Activated CD4-positive, alpha-beta T cell treated with anti-CD3 and anti-CD28 coated beads for 36 hours (primary cell): ENCODE measurements at regions of chr7 and their contacts with region 1.

Region 1: GRCh38 chr7:150448789-150449147 is 1.7 kb upstream of the GIMAP8 start:
- DNase-seq: peak; percentile 95
- ATAC-seq: peak; percentile 41
- H3K4me3 Mint-ChIP-seq: peak overlapping the region; percentile 91
- H3K27ac Mint-ChIP-seq: peak overlapping the region; percentile 96
- H3K4me1 Mint-ChIP-seq: peaks cover 51% of the 10 kb centered on the region
- H3K27me3 Mint-ChIP-seq: no peaks in the 10 kb centered on the region

Region 2: DNA sequence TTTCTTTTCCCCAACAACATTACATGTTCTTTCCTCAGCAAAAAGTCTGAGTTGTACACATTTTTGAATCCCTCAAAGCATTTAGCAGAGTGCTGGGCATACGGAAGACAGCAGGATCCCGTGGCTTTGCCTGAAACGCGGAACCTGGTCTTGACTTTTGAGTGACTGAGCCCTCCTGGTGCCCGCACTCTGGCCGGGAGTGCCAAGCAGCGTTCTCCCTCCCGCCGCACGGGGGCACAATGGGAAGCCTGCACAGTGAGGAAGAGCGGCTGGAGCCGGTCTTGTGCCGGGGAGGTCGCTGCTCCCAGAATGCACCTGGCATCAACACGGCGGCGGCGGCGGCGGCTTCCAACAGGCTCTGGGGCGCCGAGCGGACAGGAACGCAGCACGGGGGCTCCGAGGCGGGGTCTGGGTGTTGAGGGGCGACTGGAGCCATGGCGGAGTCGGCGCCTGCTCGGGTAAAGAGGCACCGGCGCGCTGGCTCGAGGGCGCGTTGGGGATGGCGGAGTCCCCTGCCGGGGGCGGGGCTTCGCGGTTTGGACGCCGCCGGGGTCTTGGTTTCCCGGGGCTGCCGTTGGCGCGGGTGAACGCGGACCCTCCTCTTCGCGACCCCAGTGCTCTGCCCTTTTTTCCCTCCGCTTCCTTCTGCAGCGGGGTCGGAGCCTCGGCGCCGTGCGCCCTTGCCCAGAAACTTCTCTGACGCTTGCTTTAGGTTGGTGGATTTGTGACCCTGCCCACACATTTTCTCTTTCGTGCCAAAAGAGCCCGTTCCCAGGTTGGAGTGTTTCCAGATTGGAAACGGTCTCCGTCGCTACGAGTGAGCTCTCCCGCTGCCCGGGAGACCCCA is 1209.2 kb before region 1 on chr7 and contains the start of gene ZNF212:
- CTCF ChIA-PET with region 1: no interaction called
- POLR2A ChIA-PET with region 1: no interaction called
- intact Hi-C with region 1: loop called in 1 of 2 experiments (anchors 5 kb)
- DNase-seq: peak; percentile 95
- ATAC-seq: peak; percentile 98
- H3K4me3 Mint-ChIP-seq: peak within 1 kb of the TSS; percentile 93
- H3K27ac Mint-ChIP-seq: peak within 1 kb of the TSS; percentile 83
- H3K4me1 Mint-ChIP-seq: peaks cover 32% of the 10 kb centered on the region
- H3K27me3 Mint-ChIP-seq: no peaks in the 10 kb centered on the region
- total RNA-seq, gene ZNF212: 9.9 to 15.9 TPM

Region 3: DNA sequence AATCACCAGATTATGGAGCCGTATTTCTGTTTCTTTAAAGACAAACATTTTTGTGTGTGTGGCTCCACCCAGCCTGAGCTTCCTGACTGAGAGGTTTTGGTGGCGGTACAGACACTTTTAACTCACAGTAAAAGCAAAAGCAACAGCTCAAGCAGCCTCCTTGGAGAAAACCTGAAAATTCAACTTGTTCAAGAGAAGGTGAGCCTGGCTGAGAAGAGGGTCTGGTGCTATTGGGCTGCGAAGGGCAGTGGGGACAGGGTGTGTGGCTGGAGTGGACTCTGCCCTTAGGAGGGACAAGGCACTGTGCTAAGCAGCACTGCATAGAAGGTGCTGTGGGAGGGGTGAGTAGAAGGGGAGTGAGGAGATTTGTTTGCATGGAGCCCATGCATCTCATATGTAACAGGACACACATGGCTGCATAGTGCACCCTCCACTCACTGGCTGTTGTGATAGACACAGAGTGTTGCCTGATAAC is 66.0 kb after region 1 on chr7 and contains the start of gene GIMAP7:
- CTCF ChIA-PET with region 1: interaction called, 25 read pairs
- POLR2A ChIA-PET with region 1: interaction called, 4 read pairs
- intact Hi-C with region 1: loop called (anchors 1 to 2 kb)
- DNase-seq: peak; percentile 73
- ATAC-seq: peak; percentile 81
- H3K4me3 Mint-ChIP-seq: peak within 1 kb of the TSS; percentile 96
- H3K27ac Mint-ChIP-seq: peak within 1 kb of the TSS; percentile 99
- H3K4me1 Mint-ChIP-seq: peaks cover 48% of the 10 kb centered on the region
- H3K27me3 Mint-ChIP-seq: no peaks in the 10 kb centered on the region
- total RNA-seq, gene GIMAP7: 34.5 to 36.9 TPM

Region 4: GRCh38 chr7:150620617-150621371 is 172.0 kb after region 1 on chr7:
- CTCF ChIA-PET with region 1: interaction called, 4 read pairs
- POLR2A ChIA-PET with region 1: interaction called, 4 read pairs
- intact Hi-C with region 1: loop called in 1 of 2 experiments (anchors 2 kb)
- DNase-seq: no peak
- ATAC-seq: peak; percentile 75
- H3K4me3 Mint-ChIP-seq: no peak overlapping the region
- H3K27ac Mint-ChIP-seq: peak overlapping the region; percentile 79
- H3K4me1 Mint-ChIP-seq: peaks cover 53% of the 10 kb centered on the region
- H3K27me3 Mint-ChIP-seq: no peaks in the 10 kb centered on the region

Region 5: DNA sequence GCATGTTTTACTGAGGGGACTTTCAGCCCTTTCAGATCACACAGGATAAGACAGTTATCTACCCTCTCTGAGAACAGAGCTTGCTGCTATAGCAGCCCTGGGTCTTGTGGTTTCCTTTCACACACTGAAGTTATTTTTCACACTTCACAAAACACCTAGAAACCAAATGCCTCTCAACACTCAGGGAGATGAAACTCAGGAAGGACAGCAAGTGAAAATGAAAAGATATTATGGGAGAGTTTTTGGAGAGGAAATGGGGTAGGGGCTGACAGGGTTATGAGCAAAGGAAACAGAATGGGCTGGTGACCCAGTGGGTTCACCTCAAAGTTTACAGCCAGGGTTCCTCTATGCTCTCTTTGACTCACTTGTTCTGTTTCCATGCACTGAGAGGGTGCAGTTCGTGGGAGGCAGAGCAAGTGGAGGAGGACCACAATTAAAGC is 219.7 kb after region 1 on chr7:
- CTCF ChIA-PET with region 1: interaction called, 3 read pairs
- POLR2A ChIA-PET with region 1: no interaction called
- intact Hi-C with region 1: loop called (anchors 2 to 5 kb)
- DNase-seq: peak; percentile 77
- ATAC-seq: peak; percentile 76
- H3K4me3 Mint-ChIP-seq: peak overlapping the region; percentile 28
- H3K27ac Mint-ChIP-seq: peak overlapping the region; percentile 94
- H3K4me1 Mint-ChIP-seq: peaks cover 89% of the 10 kb centered on the region
- H3K27me3 Mint-ChIP-seq: no peaks in the 10 kb centered on the region

Region 6: DNA sequence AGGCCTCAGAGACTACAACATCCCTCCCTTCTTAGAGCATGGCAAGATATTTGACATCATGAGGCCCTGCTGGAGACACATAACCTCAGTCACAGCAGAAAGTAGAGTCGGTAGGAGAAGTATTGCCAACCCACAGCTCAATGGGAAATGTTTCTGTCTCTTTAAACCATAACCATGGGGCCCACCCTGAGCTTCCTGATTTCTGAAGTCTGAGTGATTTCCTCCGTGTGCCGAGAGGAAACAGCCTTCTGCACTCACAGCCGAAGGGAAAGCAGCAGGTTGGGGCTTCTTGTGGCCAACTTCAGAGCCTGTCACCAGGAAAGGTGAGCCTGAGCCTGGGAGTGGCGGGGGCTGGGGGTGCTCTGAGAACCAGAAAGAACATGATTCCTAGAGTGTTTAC is 267.6 kb after region 1 on chr7 and contains the start of gene GIMAP1:
- CTCF ChIA-PET with region 1: interaction called, 21 read pairs
- POLR2A ChIA-PET with region 1: no interaction called
- intact Hi-C with region 1: loop called in 1 of 2 experiments (anchors 1 kb)
- DNase-seq: peak; percentile 72
- ATAC-seq: peak; percentile 75
- H3K4me3 Mint-ChIP-seq: peak within 1 kb of the TSS; percentile 95
- H3K27ac Mint-ChIP-seq: peak within 1 kb of the TSS; percentile 99
- H3K4me1 Mint-ChIP-seq: peaks cover 50% of the 10 kb centered on the region
- H3K27me3 Mint-ChIP-seq: no peaks in the 10 kb centered on the region
- total RNA-seq, gene GIMAP1: 3.5 to 5.5 TPM

Region 7: DNA sequence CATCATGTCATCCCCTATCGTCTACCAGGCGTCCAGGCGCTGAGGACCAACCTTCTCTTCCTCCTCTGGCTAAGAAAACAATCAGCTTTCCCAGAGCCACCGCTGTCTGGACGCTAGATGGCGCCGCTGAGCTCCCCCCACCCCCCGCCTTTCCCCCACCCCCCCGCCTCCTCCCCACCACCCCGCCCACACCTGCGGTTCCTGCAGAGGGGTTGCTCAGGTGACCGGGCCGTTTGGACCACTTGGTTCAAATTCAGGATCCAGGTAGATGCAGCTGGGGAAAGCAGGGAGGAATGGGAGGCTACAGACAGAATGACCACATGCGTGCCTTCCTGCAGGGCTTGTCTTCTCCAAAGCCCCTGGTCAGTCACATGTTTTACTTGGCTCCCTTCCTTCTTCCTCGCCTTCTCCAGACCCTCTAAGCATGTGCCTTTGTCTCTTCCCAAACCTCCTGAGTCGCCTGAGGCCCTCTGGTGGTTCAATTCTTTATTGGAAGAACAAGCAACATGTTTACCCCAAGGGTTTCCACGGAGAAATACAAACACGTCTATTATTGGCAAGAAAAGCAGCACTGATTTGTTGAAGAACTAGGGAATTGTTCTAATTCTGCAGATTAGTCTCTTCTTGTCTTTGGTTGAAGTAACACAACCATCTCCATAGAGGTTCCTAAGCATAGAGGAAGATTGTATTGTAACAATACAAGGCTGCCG is 428.2 kb after region 1 on chr7:
- CTCF ChIA-PET with region 1: no interaction called
- POLR2A ChIA-PET with region 1: no interaction called
- intact Hi-C with region 1: loop called (anchors 5 to 10 kb)
- DNase-seq: peak; percentile 76
- ATAC-seq: peak; percentile 71
- H3K4me3 Mint-ChIP-seq: no peak overlapping the region
- H3K27ac Mint-ChIP-seq: no peak overlapping the region
- H3K4me1 Mint-ChIP-seq: peaks cover 11% of the 10 kb centered on the region
- H3K27me3 Mint-ChIP-seq: peaks cover 9% of the 10 kb centered on the region